Activated T-helper 1 cell treated with anti-CD3 and anti-CD28 coated beads, Interleukin-12 subunit alpha, Interleukin-12 subunit beta, Interleukin-2, Interleukin-4 antibody, amounts not matched to agents 30 ng/mL and 10 ng/mL and 1 ng/mL, durations not matched to agents 14 hours and 24 hours and 36 hours (primary cell): ENCODE measurements at regions of chr1 and their contacts with region 1.

Region 1: GRCh38 chr1:217630711-217631591 is at the starts of genes GPATCH2 and SPATA17:
- DNase-seq: peak; percentile 75
- H3K4me3 Mint-ChIP-seq: peak within 1 kb of the TSS; percentile 96
- H3K27ac Mint-ChIP-seq: peak within 1 kb of the TSS; percentile 99
- H3K4me1 Mint-ChIP-seq: peaks cover 39% of the 10 kb centered on the region
- H3K27me3 Mint-ChIP-seq: peaks cover 13% of the 10 kb centered on the region
- total RNA-seq, gene GPATCH2: 10.4 and 12.9 TPM in 2 replicates
- total RNA-seq, gene SPATA17: not detected in 2 replicates

Region 2: DNA sequence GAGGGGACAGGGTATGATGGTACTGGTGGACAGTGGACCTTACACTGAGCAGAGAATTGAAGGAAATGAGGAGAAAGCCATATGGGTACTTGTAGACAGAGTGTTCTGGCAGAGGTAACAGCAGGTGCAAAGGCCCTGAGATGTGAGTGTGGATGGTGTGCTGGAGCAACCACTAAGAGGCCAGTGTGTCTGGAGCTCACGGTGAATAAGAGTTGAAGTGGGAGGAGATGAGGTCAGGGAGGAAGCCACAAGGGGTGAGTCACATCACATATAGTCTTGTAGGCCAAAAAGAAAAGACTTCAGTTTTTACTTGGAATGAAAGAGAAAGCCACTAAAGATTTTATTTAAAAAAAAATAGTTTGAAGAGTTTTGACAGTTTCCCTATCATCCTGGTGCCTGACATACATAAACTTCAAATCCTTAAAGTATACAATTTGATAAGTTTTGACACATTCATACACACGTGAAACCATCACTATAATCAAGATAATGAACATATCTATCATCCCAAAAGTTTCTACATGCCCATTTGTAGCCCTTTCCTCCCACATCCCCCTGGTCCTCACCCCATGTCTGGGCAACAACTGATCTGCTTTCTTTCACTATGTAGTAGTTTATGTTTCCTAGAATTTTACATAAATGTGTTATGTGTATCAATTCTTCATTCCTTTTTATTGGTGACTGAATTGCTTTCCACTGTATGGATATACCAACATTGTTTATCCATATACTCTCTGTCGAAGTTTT is 148.4 kb before region 1 on chr1:
- intact Hi-C with region 1: loop called (anchors 1 kb)
- DNase-seq: peak; percentile 46
- H3K4me3 Mint-ChIP-seq: peak overlapping the region; percentile 37
- H3K27ac Mint-ChIP-seq: peak overlapping the region; percentile 77
- H3K4me1 Mint-ChIP-seq: peaks cover 33% of the 10 kb centered on the region
- H3K27me3 Mint-ChIP-seq: peaks cover 4% of the 10 kb centered on the region

Region 3: DNA sequence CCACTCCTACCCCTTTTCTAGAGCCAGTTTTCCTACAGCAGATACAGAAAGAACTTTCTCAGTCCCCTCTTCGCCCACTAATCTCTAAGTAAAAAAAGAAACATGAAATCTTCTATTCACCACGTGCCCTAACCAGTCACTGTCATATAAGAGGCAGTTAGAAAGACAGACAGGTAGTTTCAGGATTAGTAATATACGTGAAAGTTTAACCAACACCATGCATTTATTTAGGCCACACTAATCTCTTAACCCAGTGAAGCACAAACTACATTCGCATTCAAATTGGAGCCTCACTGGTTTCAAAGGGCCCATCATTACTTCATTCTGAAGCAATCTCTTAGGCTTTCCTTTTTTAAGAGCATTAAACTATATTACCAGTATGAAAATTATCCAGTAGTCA is 10.1 kb before region 1 on chr1:
- intact Hi-C with region 1: loop called (anchors 1 kb)
- DNase-seq: no peak
- H3K4me3 Mint-ChIP-seq: no peak overlapping the region
- H3K27ac Mint-ChIP-seq: no peak overlapping the region
- H3K4me1 Mint-ChIP-seq: peaks cover 12% of the 10 kb centered on the region
- H3K27me3 Mint-ChIP-seq: no peaks in the 10 kb centered on the region

Region 4: DNA sequence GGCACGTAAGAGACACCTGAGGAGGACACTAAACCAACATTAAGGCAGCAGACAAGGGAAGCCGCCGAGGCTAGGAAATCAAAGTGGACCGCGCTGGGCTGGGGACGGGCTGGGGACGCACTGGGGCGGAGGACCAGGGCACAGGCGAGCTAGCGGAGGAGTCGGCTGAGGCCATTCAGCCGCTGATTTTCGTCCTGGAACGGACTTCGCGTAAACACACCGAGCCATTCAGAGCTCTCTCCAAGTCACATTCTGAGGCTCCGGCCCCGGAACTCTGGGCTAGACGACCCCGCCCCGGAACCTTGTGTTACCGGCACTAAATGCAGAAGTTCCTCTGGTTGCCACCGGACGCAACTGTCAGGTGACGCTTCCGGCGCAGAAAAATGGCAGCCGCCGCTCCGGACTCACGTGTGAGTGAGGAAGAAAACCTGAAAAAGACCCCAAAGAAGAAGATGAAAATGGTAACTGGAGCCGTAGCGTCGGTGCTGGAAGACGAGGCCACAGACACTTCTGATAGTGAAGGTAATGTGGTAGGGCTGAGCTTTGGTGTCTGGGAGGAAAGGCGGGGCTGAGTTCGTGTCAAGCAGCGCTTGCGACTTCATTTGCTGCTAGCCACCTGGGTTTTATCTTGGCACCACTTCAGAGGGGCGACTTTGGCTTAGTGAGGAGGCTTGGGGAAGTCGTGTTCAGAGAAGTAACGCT is 654.1 kb after region 1 on chr1 and contains the start of gene RRP15:
- intact Hi-C with region 1: loop called (anchors 2 kb)
- DNase-seq: peak; percentile 82
- H3K4me3 Mint-ChIP-seq: peak within 1 kb of the TSS; percentile 95
- H3K27ac Mint-ChIP-seq: peak within 1 kb of the TSS; percentile 98
- H3K4me1 Mint-ChIP-seq: peaks cover 37% of the 10 kb centered on the region
- H3K27me3 Mint-ChIP-seq: peaks cover 6% of the 10 kb centered on the region
- total RNA-seq, gene RRP15: 42.2 and 50.1 TPM in 2 replicates